Esophagus squamous epithelium (tissue), 5 donors: ENCODE measurements at regions of chr14 and their contacts with region 1.

Region 1: DNA sequence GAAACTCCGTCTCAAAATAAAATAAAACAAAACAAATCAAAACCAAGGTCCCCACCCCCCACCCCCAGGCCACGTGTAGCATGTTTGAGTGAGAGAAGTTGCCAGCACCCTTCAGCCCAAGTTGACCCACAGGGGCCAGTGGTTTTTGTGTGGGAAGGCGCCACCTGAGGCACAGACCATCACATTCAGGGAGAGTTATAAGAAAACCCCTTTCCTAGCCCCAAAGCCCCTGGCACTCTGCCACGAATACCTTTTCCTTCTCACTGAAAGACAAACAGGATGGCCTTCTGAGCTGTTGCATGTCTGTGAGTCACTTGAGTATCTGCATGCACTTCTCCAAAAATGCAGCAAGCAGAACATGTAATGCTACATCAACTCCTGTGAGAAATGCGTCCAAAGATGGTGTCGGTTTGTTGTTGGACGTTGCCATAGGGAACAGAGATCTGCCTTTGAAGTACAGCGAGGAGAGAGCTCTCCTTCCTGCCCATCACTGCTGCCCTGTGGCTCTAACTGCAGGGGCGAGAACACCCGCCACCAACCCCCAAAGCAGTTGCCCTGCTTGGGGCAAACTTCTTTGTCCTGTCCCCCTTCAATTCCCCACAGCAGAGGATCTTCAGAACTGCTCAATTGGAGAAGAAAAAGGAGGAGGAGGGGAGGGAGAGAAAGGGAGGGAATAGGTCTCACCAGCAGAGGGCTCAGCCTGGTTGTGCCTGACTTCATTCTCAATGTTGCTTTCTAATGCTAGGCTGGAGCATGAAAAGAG is 2.7 kb upstream of the TRAF3 start:
- DNase-seq: no peak
- H3K4me3 ChIP-seq: no peak overlapping the region
- H3K27ac ChIP-seq: peak overlapping the region in 3 of 4 donors; percentile 19 to 54 (median 53)
- H3K4me1 ChIP-seq: peaks cover 6 to 36% (median 11%) of the 10 kb centered on the region in 3 donors
- H3K27me3 ChIP-seq: no peaks in the 10 kb centered on the region
- CTCF ChIP-seq: peak; percentile 67 to 81 (median 72)
- POLR2A ChIP-seq: no peak

Region 2: DNA sequence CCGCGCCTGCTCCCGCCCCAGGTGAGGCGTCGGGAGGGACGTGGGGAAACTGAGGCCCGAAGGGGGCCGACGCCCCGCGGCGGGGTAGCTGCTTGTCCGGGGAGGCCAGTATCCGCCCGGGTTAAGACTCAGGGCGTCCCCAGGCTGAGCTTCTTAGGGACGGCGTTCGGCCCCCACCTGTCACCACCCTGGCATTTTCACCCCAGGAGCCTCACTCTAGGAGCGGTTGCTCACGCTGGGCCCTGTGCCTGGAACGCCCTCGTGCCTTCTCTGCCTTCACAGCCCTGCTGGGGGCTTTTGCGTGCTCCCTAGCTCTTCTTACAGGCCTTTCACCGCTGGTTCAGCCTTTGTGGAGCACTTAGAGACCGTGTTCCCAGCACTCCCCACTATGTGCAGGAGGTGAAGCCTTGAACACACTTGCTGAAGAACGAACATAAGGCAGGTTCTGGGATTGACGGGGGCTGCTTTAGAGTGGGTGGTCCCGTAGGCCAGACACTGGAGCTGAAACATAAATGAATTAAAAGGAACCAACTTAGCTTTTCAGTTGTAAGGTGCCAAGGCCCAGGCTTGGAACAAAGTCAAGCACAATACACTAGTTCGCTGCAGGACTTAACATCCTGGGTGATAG is 454.4 kb before region 1 on chr14:
- intact Hi-C with region 1: no loop called
- DNase-seq: no peak
- H3K4me3 ChIP-seq: peak overlapping the region; percentile 62 to 79 (median 72)
- H3K27ac ChIP-seq: peak overlapping the region; percentile 89 to 96 (median 94)
- H3K4me1 ChIP-seq: peaks cover 8 to 62% (median 20%) of the 10 kb centered on the region in 3 donors
- H3K27me3 ChIP-seq: no peaks in the 10 kb centered on the region
- CTCF ChIP-seq: no peak
- POLR2A ChIP-seq: no peak

Region 3: GRCh38 chr14:102913341-102914211 is 139.0 kb after region 1 on chr14:
- intact Hi-C with region 1: loop called (anchors 5 kb)
- DNase-seq: no peak
- H3K4me3 ChIP-seq: no peak overlapping the region
- H3K27ac ChIP-seq: no peak overlapping the region
- H3K4me1 ChIP-seq: no peaks in the 10 kb centered on the region
- H3K27me3 ChIP-seq: no peaks in the 10 kb centered on the region
- CTCF ChIP-seq: no peak
- POLR2A ChIP-seq: no peak